Ovary (tissue), 10 donors: ENCODE measurements at regions of chr19 and their contacts with region 1.

Region 1: DNA sequence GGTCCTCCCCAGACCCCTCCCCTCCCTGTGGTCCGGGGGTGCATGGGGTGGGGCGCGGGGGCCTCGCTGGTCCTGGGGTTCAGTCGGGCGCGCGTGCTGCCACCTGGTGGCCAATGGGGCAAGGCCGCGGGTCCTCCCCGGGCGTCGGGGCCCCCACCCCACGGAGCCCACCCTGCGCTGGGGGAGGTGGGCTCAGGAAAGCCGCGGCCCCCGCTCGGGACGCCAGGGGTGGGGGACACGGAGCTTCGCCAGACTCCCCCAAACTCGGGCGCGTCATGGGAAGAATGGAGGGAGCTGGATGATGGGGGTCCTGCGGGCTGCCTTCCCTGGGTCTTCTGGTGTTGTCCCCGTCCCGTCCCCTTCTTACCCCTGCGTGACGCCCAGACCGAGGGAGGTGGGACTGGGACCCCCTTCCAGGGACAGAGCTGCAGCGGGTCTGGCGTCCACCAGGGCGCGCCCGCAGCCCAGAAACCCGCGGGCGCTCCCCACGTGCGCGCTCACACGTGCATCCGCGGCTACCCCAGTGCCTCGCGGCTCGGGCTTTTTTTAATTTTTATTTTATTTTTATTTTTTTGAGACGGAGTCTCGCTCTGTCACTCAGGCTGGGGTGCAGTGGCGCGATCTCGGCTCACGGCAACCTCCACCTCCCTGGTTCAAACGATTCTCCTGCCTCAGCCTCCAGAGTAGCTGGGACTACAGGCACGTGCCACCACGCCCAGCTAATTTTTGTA is 19.8 kb upstream of the TCF3 start:
- DNase-seq: peak in 3 of 5 donors; percentile 40 to 52 (median 47)
- H3K4me3 ChIP-seq: no peak overlapping the region
- H3K27ac ChIP-seq: no peak overlapping the region
- H3K4me1 ChIP-seq: no peaks in the 10 kb centered on the region
- H3K27me3 ChIP-seq: peaks cover 13% of the 10 kb centered on the region
- CTCF ChIP-seq: peak; percentile 50 to 54 (median 51)
- EP300 ChIP-seq: no peak
- POLR2A ChIP-seq: no peak

Region 2: DNA sequence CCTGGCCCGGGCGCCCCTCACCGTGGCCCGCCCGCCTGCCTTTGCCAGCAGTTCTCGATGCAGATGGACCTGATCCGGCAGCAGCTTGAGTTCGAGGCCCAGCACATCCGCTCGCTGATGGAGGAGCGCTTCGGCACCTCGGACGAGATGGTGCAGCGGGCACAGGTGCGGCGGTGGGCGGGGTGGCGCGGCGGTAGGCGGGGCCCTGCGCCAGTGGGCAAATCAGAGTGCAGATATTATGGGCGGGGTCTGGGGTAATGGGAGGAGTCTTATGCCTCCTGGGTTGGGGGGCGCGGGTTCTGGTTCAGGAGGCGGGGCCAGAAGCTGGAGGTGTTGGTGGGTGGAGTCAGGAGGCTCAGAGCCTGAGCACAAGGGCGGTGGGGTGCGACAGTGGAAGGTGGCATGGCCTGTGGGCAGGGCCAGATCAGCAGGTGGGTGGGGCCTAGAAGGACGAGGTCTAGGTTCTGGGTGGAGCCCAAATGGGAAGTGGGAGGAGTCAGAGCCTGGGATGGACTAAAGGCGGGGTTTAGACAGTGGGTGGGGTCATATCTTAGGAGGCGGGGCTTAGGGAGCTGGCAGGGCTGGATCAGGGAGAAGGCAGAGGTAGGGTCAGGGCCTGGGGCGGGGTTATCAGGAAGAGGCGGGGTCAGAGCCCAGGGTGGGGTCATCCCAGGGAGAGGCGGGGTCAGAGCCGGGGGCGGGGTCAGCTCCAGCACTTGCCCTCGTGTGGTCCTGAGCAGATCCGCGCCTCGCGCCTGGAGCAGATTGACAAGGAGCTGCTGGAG is 216.7 kb before region 1 on chr19:
- intact Hi-C with region 1: no loop called
- DNase-seq: peak in 1 of 5 donors; percentile 58
- H3K4me3 ChIP-seq: no peak overlapping the region
- H3K27ac ChIP-seq: no peak overlapping the region
- H3K4me1 ChIP-seq: peaks cover 1% of the 10 kb centered on the region
- H3K27me3 ChIP-seq: peaks cover 7% of the 10 kb centered on the region
- CTCF ChIP-seq: no peak
- EP300 ChIP-seq: no peak
- POLR2A ChIP-seq: no peak

Region 3: GRCh38 chr19:1540365-1540925 is 131.8 kb before region 1 on chr19:
- intact Hi-C with region 1: loop called in 3 of 4 experiments (anchors 5 to 10 kb)
- DNase-seq: peak in 3 of 5 donors; percentile 25 to 56 (median 37)
- H3K4me3 ChIP-seq: no peak overlapping the region
- H3K27ac ChIP-seq: no peak overlapping the region
- H3K4me1 ChIP-seq: peaks cover 8% of the 10 kb centered on the region
- H3K27me3 ChIP-seq: no peaks in the 10 kb centered on the region
- CTCF ChIP-seq: no peak
- EP300 ChIP-seq: no peak
- POLR2A ChIP-seq: no peak

Region 4: DNA sequence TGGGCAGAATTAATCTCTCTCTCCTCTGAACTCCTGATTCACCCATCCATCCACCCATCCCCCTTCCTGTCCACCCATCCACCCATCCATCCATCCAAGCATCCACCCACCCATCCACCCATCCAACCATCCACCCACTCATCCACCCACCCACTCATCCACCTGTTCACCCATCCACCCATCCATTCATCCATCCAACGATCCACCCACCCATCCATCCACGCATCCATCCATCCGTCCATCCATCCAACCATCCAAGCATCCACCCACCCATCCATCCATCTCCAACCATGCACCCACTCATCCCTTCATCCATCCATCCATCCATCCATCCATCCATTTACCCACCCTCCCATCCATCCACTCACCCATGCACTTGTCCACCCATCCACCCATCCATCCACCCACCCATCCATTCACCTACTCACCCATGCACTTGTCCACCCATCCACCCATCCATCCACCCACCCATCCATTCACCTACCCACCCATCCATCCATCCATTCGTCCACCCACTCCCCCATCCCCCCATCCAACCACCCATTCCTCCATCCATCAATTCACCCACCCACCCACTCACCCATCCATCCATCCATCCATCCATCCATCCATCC is 122.8 kb before region 1 on chr19:
- intact Hi-C with region 1: loop called (anchors 5 to 10 kb)
- DNase-seq: no peak
- H3K4me3 ChIP-seq: no peak overlapping the region
- H3K27ac ChIP-seq: no peak overlapping the region
- H3K4me1 ChIP-seq: no peaks in the 10 kb centered on the region
- H3K27me3 ChIP-seq: no peaks in the 10 kb centered on the region
- CTCF ChIP-seq: no peak
- EP300 ChIP-seq: no peak
- POLR2A ChIP-seq: no peak

Region 5: DNA sequence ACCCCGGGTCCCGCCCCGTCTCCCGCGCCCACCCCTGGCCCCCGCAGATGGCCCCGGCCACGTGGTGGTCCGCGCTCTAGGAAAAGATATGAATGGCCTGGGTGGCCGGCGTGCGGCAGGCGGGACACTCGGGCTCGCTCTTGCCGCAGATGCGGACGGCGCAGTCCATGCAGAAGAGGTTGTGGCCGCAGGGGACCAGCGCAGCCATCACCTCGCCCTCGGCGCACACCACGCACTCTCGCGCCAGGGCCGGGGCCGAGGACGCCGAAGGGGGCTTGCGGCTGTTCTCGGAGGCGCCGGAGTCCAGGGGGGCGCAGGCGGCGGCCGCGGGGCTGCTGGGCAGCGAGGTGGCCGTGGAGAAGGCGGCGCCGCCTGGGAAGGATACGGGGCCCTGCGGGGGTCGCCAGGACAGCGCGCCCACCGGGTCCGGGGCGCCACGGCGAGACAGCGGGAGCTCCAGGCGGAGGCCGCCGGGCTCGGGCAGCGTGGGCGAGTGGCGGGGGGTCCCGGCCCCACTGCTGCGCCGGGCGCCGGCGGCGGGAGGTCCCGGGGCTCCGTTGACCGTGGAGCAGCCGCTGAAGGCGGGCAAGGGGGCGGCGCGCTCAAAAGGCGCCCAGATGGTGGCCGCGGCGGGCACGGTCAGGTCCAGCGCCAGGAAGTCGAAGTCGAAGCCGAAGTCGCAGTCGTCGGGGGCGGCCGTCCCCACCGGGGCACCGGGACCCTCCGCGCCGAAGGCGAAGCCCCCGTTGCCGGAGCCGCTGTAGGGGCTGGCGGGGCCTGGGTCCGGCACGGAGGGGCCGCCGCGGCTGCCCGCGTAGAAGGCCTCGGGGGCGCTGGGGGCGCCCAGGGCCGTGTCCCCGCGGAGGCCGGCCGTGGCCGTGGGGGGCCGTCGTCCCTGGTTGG is 116.5 kb before region 1 on chr19:
- intact Hi-C with region 1: loop called in 1 of 4 experiments (anchors 10 kb)
- DNase-seq: no peak
- H3K4me3 ChIP-seq: no peak overlapping the region
- H3K27ac ChIP-seq: no peak overlapping the region
- H3K4me1 ChIP-seq: no peaks in the 10 kb centered on the region
- H3K27me3 ChIP-seq: no peaks in the 10 kb centered on the region
- CTCF ChIP-seq: no peak
- EP300 ChIP-seq: no peak
- POLR2A ChIP-seq: no peak

Region 6: DNA sequence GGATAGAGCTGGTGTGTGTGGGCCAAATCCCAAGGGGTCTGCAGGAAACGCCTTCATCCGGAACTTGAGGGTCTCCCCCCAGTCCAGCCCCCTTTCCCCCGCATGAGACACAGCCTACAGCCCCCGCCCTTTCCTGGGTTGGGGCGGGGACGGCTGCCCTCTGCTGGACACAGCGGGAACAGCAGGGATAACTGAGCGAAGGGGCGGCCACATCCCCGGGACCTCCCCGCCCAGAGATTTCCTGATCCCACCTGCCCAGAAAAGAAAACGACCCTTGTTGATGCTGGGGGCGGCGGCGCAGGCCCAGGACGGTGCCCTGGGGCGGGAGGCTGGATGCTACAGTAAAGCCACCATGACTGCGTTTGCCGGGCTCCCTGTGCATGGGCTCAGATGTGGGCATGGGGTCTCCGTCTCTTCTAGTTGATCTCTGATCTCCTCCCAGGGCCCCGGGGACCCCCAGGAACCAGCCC is 95.3 kb after region 1 on chr19:
- intact Hi-C with region 1: loop called in 1 of 4 experiments (anchors 5 kb)
- DNase-seq: peak in 3 of 5 donors; percentile 43 to 69 (median 65)
- H3K4me3 ChIP-seq: no peak overlapping the region
- H3K27ac ChIP-seq: no peak overlapping the region
- H3K4me1 ChIP-seq: no peaks in the 10 kb centered on the region
- H3K27me3 ChIP-seq: peaks cover 2% of the 10 kb centered on the region
- CTCF ChIP-seq: peak; percentile 69 to 81 (median 76)
- EP300 ChIP-seq: no peak
- POLR2A ChIP-seq: no peak

Region 7: DNA sequence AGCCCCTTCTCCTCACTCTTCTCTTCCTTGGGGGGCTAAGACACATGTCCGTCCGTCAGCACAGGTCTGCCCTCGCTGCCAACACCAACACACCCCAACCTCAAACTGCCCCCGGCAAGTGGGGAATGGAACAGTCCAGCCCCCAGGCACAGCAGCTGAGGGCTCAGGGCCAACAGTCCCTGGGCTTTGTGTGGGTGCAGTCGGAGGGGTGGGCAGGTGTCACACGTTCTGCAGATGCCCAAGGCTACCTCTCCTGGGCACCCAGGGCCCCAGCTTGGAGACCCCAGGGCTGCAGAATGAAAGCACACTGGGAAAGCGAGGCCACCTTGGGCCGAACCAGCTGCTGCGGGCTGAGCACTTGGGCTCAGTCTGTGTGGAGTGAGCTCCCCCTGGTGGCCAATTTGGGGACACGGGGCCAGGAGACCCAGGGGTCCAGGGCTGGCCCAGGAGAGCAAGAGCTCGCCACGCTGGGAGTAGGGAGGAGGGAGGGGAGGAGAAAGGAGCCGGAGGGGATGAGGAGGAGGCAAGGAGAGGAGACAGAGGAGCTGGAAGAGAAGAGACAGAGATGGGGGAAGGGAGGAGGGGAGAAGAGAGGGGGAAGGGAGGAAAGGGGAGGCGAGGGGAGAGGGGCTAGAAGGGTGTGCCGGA is 153.8 kb after region 1 on chr19:
- intact Hi-C with region 1: loop called in 1 of 4 experiments (anchors 10 kb)
- DNase-seq: peak; percentile 84 to 92 (median 92)
- H3K4me3 ChIP-seq: no peak overlapping the region
- H3K27ac ChIP-seq: peak overlapping the region; percentile 68 to 89
- H3K4me1 ChIP-seq: peaks cover 8% of the 10 kb centered on the region
- H3K27me3 ChIP-seq: no peaks in the 10 kb centered on the region
- CTCF ChIP-seq: peak; percentile 91 to 95 (median 95)
- EP300 ChIP-seq: no peak
- POLR2A ChIP-seq: no peak

Region 8: GRCh38 chr19:1956868-1957492 is 284.8 kb after region 1 on chr19:
- intact Hi-C with region 1: loop called in 1 of 4 experiments (anchors 5 kb)
- DNase-seq: peak in 1 of 5 donors; percentile 46
- H3K4me3 ChIP-seq: no peak overlapping the region
- H3K27ac ChIP-seq: no peak overlapping the region
- H3K4me1 ChIP-seq: peaks cover 16% of the 10 kb centered on the region
- H3K27me3 ChIP-seq: no peaks in the 10 kb centered on the region
- CTCF ChIP-seq: no peak
- EP300 ChIP-seq: no peak
- POLR2A ChIP-seq: no peak